ENCODE measurements at regions of chr3 and their contacts with region 1.

Region 1: DNA sequence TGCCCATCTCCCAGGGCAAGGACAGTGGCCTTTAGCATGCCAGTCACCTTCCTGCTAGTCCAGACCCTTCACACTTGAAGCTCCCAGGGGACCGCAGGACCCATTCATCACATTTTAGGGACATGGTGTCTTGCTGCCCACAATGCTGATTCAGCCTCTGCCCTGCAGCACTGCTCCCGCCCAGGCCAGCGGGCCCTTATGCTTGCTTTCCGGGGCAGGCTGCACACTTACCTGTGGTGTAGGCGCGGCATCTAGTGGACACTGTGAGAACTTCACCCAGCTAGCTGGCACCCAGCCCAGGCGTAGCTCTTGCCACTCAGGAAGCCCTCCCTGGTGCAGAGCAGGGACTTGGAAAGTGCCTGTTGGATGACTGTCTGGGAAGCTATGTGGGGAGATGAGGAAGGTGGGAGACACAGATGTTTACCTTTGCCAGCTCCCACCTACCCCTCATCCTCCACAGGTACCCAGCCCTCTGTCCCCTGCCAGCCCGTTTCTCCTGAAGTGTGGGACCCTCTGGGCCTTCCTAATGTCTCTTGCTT is 26.2 kb upstream of the NR2C2 start:
- DNase-seq: peak; percentile 87
- H3K4me3 Mint-ChIP-seq: no peak overlapping the region
- H3K27ac Mint-ChIP-seq: no peak overlapping the region
- H3K4me1 Mint-ChIP-seq: no peaks in the 10 kb centered on the region
- H3K27me3 Mint-ChIP-seq: peaks cover 64% of the 10 kb centered on the region
- CTCF ChIP-seq: peak; percentile 91

Region 2: GRCh38 chr3:14672588-14672987 is 248.6 kb before region 1 on chr3:
- CTCF ChIA-PET with region 1: interaction called, 22 read pairs
- intact Hi-C with region 1: loop called (anchors 1 kb)
- DNase-seq: no peak
- H3K4me3 Mint-ChIP-seq: no peak overlapping the region
- H3K27ac Mint-ChIP-seq: no peak overlapping the region
- H3K4me1 Mint-ChIP-seq: no peaks in the 10 kb centered on the region
- H3K27me3 Mint-ChIP-seq: no peaks in the 10 kb centered on the region
- CTCF ChIP-seq: no peak

Region 3: DNA sequence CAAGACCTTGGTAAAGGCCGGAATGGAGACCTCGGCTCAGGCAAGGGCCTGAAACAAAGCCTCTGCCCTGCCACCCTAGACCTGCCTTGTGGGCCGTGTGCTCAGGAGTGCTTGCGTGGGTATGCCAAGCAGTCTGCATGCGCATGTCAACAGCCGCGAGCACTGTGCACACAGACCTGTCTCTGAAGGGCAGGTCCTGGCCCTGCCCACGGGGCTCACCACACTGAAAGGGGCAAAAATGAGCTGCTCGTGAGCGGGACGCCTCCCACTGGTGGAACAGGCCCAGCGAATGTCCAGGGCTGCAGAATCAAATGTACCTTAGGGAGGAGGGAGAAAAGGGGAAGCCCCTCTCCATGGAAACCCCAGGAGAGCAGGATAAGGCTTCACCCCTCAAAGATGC is 146.7 kb before region 1 on chr3:
- CTCF ChIA-PET with region 1: no interaction called
- intact Hi-C with region 1: no loop called
- DNase-seq: no peak
- H3K4me3 Mint-ChIP-seq: no peak overlapping the region
- H3K27ac Mint-ChIP-seq: no peak overlapping the region
- H3K4me1 Mint-ChIP-seq: no peaks in the 10 kb centered on the region
- H3K27me3 Mint-ChIP-seq: peaks cover 53% of the 10 kb centered on the region
- CTCF ChIP-seq: no peak

Region 4: DNA sequence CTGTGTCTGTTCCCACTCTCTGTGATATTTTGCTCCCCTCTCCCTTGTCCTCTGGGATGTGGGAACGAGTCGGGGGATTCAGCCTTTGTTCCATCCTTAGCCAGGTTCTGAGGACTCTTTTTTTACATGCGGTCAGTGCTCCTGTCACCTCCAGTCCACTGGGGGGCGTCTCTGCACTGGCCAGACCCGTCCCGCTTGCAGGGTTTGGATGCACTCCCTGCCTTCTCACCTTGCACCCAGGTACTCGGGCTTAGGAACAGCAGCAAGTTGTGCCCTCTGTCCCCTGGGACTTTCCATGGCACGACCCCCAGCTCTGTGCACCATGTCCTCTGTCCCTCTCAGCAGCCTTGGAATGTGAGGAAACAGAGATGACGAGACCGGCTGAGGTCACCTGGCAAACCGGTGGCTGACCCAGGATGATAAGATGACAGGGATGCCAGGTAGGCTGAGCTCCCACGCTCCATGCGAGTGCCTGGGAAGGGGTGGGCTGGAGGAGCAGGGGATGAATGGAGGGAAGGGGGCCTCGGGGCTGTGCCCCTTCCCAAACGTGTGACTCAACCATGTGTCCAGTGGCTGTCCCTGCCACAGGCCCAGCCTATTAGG is 129.7 kb before region 1 on chr3:
- CTCF ChIA-PET with region 1: interaction called, 12 read pairs
- intact Hi-C with region 1: loop called (anchors 1 kb)
- DNase-seq: peak; percentile 78
- H3K4me3 Mint-ChIP-seq: no peak overlapping the region
- H3K27ac Mint-ChIP-seq: no peak overlapping the region
- H3K4me1 Mint-ChIP-seq: no peaks in the 10 kb centered on the region
- H3K27me3 Mint-ChIP-seq: peaks cover 70% of the 10 kb centered on the region
- CTCF ChIP-seq: peak; percentile 47

Region 5: GRCh38 chr3:15023249-15023648 is 102.1 kb after region 1 on chr3:
- CTCF ChIA-PET with region 1: no interaction called
- intact Hi-C with region 1: loop called (anchors 10 kb)
- DNase-seq: no peak
- H3K4me3 Mint-ChIP-seq: no peak overlapping the region
- H3K27ac Mint-ChIP-seq: no peak overlapping the region
- H3K4me1 Mint-ChIP-seq: no peaks in the 10 kb centered on the region
- H3K27me3 Mint-ChIP-seq: no peaks in the 10 kb centered on the region
- CTCF ChIP-seq: no peak

Region 6: GRCh38 chr3:15064835-15065549 is 143.8 kb after region 1 on chr3 and contains the start of gene MRPS25:
- CTCF ChIA-PET with region 1: no interaction called
- intact Hi-C with region 1: loop called (anchors 5 kb)
- DNase-seq: peak; percentile 87
- H3K4me3 Mint-ChIP-seq: peak within 1 kb of the TSS; percentile 92
- H3K27ac Mint-ChIP-seq: peak within 1 kb of the TSS; percentile 77
- H3K4me1 Mint-ChIP-seq: peaks cover 14% of the 10 kb centered on the region
- H3K27me3 Mint-ChIP-seq: no peaks in the 10 kb centered on the region
- CTCF ChIP-seq: no peak
- total RNA-seq, gene MRPS25: 51.8 and 56.6 TPM in 2 replicates

Measured in Calu3 (cell line).